Gastrocnemius medialis (tissue), 4 donors: ENCODE measurements at regions of chr11 and their contacts with region 1.

Region 1: GRCh38 chr11:107719557-107720302 is 7.9 kb upstream of the SLN start:
- DNase-seq: peak; percentile 42 to 53
- ATAC-seq: peak; percentile 60 to 80
- H3K4me3 ChIP-seq: peak overlapping the region in 3 of 4 donors; percentile 14 to 41 (median 19)
- H3K27ac ChIP-seq: peak overlapping the region; percentile 88 to 94 (median 92)
- H3K4me1 ChIP-seq: peaks cover 33 to 44% of the 10 kb centered on the region in 2 donors
- H3K27me3 ChIP-seq: no peaks in the 10 kb centered on the region
- CTCF ChIP-seq: no peak
- POLR2A ChIP-seq: peak; percentile 50 to 69

Region 2: DNA sequence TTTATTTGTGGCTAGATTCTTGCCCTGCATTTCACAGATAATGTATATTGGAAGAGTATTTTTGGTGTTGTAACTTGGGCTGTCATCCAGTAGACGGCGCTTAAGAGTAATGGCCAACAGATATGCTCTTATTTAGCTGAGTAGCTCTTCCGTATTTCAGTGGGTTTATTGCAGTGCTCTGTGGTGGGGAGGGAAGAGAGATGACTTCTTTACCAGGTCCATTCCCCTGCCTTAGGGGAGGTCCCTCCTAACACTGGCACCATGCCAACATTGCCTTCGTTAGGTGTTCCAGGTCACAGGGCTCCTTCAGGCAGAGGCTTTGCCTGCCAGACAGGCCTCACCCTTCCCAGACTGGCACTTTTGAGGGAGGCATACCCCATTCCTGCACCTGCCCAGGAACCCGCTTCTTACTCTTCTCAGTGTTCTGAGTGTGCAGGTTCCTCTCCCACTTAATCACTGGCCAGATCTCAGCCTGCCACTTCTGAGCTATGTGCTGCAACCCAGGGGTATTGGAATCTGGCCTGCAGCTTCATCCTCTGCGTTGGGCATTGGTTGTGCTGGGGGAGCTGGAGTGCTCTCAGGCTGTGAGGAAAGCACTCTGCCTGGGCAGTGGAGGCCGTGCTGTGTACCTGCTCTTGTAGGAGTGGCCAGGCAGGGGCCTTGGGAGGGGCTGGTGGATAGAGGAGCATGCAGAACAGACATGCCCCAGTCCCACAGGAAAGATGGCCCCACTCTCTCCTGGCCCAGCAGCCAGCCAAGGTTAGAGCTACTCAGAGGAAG is 21.5 kb after region 1 on chr11:
- in situ Hi-C with region 1: no loop called
- intact Hi-C with region 1: loop called (anchors 2 kb)
- DNase-seq: no peak
- ATAC-seq: no peak
- H3K4me3 ChIP-seq: no peak overlapping the region
- H3K27ac ChIP-seq: peak overlapping the region in 3 of 4 donors; percentile 1 to 88 (median 85)
- H3K4me1 ChIP-seq: peaks cover 25 to 27% of the 10 kb centered on the region in 2 donors
- H3K27me3 ChIP-seq: no peaks in the 10 kb centered on the region
- CTCF ChIP-seq: peak in 1 of 5 experiments; percentile 25
- POLR2A ChIP-seq: no peak